Aorta (tissue), 5 donors: ENCODE measurements at regions of chr20 and their contacts with region 1.

Region 1: GRCh38 chr20:15913391-15914025 is 659.7 kb downstream of the KIF16B start:
- DNase-seq: no peak
- ATAC-seq: no peak
- H3K4me3 ChIP-seq: no peak overlapping the region
- H3K27ac ChIP-seq: no peak overlapping the region
- H3K4me1 ChIP-seq: peaks cover 0 to 4% of the 10 kb centered on the region in 2 donors
- H3K27me3 ChIP-seq: no peaks in the 10 kb centered on the region

Region 2: DNA sequence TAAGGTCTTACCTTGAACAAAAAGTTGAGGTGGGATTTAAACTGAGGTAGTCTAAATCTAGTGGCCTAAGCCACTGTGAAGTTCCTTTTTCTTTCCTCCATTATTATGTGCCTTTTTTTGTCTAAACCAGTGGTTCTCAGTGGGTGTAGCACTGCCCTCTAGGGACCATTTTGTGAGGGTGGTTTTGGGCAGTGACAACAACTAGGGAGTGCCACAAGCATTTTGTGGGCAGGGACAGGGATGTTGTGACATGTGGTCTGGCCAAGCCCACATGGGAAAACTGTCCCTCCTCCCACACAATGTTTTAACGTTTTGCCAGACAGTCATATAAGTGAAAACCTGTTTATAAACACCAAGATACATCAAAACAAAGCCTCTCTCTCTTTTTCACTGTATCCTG is 676.7 kb before region 1 on chr20:
- intact Hi-C with region 1: no loop called
- DNase-seq: no peak
- ATAC-seq: no peak
- H3K4me3 ChIP-seq: no peak overlapping the region
- H3K27ac ChIP-seq: no peak overlapping the region
- H3K4me1 ChIP-seq: no peaks in the 10 kb centered on the region
- H3K27me3 ChIP-seq: no peaks in the 10 kb centered on the region

Region 3: GRCh38 chr20:15564981-15565380 is 348.5 kb before region 1 on chr20:
- intact Hi-C with region 1: no loop called
- DNase-seq: no peak
- ATAC-seq: no peak
- H3K4me3 ChIP-seq: no peak overlapping the region
- H3K27ac ChIP-seq: no peak overlapping the region
- H3K4me1 ChIP-seq: peaks cover 0 to 1% of the 10 kb centered on the region in 2 donors
- H3K27me3 ChIP-seq: no peaks in the 10 kb centered on the region

Region 4: DNA sequence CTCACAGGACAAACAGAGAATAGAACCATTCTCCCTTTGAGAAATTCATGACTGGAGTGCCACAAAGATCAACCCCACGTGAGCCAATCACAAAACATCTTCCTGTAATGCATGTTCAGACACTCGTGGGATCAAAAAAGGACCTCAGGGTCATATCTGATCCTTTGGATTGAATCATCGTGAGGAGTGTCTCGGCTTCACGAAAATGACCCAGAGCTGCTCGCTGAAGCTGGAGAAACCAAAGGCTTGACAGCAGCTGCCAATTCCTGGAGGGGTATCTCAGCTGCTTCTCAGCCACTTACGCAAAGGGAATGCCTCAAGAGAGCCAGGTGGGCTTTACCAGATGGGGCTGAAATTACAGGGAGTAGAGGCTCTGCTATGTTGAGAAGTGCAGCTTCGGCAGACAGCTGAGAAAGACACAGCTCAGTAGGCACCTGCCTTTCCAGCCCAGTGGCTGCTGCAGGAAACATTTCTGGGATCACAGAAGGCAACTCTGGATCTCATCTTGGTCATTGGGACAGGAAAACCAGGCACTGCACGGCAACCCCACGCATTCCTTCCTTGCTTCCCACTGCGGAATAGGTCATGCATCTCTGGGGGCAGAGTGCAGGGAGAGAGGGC is 153.4 kb before region 1 on chr20:
- intact Hi-C with region 1: loop called in 1 of 2 experiments (anchors 10 kb)
- DNase-seq: no peak
- ATAC-seq: no peak
- H3K4me3 ChIP-seq: no peak overlapping the region
- H3K27ac ChIP-seq: peak overlapping the region in 1 of 2 donors; percentile 64
- H3K4me1 ChIP-seq: peaks cover 2% of the 10 kb centered on the region in 2 donors
- H3K27me3 ChIP-seq: no peaks in the 10 kb centered on the region

Region 5: GRCh38 chr20:15867901-15868300 is 45.6 kb before region 1 on chr20:
- intact Hi-C with region 1: no loop called
- DNase-seq: no peak
- ATAC-seq: no peak
- H3K4me3 ChIP-seq: no peak overlapping the region
- H3K27ac ChIP-seq: no peak overlapping the region
- H3K4me1 ChIP-seq: no peaks in the 10 kb centered on the region
- H3K27me3 ChIP-seq: no peaks in the 10 kb centered on the region

Region 6: DNA sequence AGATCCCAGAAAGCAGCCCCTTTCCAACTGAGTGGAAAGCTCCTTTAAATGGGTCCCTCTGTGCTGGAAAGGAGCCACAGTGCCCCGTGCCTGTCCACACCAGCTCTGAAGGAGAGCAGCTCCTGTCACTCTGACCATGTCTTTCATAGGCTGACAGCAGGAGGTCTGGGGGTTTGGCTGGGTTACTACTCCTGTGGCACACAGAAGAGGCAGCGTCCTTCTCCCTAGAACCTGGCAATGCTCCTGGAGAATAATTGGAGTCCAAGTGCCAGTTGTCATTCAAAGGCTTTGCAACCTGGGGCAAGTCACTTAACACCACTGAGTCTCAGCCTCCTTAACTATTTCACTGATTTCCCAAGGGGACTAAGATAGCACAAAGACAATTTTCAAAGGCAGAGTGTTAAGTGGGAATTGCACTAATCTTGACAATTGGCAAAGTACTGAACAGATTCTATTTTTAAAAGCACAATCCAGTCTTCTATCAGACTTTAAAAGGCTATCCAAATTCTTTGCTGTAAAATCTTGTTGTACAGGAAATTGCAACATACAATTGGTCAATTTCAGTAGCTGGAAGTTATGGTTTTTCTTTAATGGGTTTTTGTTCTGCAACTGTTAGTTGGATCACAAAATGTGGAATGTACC is 202.5 kb after region 1 on chr20:
- intact Hi-C with region 1: loop called in 1 of 2 experiments (anchors 5 kb)
- DNase-seq: no peak
- ATAC-seq: no peak
- H3K4me3 ChIP-seq: no peak overlapping the region
- H3K27ac ChIP-seq: no peak overlapping the region
- H3K4me1 ChIP-seq: no peaks in the 10 kb centered on the region
- H3K27me3 ChIP-seq: no peaks in the 10 kb centered on the region